ENCODE measurements at regions of chr15 and their contacts with region 1.

Region 1: DNA sequence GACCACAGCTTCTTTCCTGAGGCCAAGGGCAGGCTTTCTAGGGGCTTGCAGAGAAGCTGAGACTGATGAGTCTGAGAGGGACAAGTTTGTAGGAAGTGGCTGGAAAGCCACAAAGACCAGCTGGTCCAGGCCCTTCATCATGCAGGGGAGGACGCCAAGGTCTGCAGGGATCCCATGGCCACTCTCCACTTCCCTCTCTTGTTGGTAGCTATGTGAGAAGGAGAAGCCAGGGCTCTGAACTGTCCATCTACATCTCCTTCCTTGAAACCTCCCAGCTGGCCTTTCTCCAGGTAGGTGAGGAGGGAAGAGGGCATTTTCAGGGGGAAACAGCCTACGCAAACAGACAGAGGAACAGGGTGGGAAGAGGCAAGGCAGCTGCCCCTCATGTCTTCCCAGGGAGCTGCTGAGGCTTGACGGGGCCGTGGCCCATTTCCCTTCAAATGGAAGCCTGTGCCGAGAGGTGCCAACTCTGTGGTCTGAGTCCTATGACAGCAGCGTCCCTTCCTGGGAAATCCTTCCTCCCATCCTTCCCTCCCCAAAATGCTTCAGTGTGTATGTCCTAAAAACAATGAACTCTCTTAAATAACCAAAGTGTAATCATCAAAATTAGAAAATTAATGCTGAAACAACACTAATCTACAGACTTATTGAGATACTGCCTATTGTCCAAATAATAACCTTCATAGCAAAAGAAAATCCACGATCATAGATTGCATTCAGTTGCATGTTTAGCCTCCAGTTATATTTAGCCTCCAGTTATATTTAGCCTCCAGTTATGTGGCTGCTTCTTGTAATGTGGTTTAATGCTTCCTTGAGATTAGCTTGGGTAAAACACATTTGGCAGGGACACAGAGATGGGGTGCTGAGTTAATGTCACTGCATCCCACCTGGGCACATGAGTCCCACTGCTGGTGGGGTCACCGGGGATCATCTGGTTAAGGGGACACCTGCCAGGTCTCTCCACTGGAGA is 36.0 kb downstream of the GNB5 start:
- DNase-seq: no peak
- ATAC-seq: peak; percentile 22
- H3K4me3 ChIP-seq: no peak overlapping the region
- H3K27ac ChIP-seq: no peak overlapping the region
- H3K4me1 ChIP-seq: no peaks in the 10 kb centered on the region
- H3K27me3 ChIP-seq: no peaks in the 10 kb centered on the region
- CTCF ChIP-seq: no peak

Region 2: DNA sequence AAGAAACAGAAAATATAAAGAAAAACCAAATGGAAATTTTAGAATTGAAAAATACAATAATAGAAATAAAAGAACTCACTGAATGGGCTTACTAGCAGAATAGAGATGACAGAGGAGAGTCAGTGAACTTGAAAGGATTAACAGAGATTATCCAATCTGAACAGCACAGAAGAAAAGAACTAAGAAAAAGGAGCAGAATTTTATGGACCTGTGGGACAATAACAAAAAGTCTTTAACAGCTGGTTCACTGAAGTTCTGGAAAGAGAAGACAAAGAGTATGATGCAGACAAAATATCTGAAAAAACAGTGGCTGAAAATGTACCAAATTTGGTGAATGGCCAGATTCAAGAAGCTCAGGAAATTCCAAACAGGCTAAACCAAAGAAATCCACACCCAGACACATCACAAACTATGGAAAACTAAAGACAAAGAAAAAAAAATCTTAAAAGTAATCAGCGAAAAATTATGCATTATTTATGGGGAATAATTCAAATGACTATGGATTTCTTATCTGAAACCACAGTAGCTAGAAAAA is 45.7 kb after region 1 on chr15:
- intact Hi-C with region 1: loop called in 1 of 2 experiments (anchors 5 kb)
- DNase-seq: no peak
- ATAC-seq: no peak
- H3K4me3 ChIP-seq: no peak overlapping the region
- H3K27ac ChIP-seq: no peak overlapping the region
- H3K4me1 ChIP-seq: no peaks in the 10 kb centered on the region
- H3K27me3 ChIP-seq: no peaks in the 10 kb centered on the region
- CTCF ChIP-seq: no peak

Region 3: DNA sequence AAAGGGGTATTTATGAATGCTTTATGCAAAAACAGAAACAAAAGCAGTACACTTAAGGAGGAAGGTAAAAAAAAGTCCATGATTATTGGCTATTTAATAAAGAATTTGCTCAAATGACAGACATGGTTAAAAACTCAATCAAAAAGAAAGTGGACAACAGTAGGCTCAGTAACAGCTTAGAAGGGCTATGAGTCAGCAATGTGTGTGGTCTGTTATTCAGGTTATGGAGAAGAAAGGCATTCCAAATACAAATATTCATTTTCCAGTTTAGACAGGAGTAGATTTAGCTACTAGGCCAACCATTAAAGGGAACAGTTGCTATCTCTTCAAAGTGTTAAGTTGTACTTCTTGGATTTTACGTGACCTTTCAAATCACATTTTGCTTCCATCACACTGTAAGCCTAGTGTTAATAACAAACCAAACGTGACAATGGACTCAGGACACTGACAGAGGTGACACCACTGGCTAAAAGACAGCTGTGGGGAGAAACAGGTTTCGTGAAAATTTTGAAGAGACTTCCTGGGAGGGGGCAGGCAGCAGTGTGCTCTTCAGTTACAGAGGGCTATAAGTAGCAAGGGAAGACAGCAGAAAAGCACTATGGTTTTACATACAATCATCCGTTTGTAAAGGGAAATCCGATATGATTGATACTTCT is 182.1 kb after region 1 on chr15:
- intact Hi-C with region 1: no loop called
- DNase-seq: no peak
- ATAC-seq: peak; percentile 75
- H3K4me3 ChIP-seq: no peak overlapping the region
- H3K27ac ChIP-seq: no peak overlapping the region
- H3K4me1 ChIP-seq: no peaks in the 10 kb centered on the region
- H3K27me3 ChIP-seq: no peaks in the 10 kb centered on the region
- CTCF ChIP-seq: no peak

Region 4: GRCh38 chr15:52440400-52440799 is 285.2 kb after region 1 on chr15:
- intact Hi-C with region 1: no loop called
- DNase-seq: no peak
- ATAC-seq: no peak
- H3K4me3 ChIP-seq: no peak overlapping the region
- H3K27ac ChIP-seq: no peak overlapping the region
- H3K4me1 ChIP-seq: peaks cover 0 to 34% of the 10 kb centered on the region in 2 donors
- H3K27me3 ChIP-seq: no peaks in the 10 kb centered on the region
- CTCF ChIP-seq: no peak

Measured in left lung (tissue), 14 donors.